ENCODE measurements at regions of chr18 and their contacts with region 1.

Region 1: GRCh38 chr18:35581898-35582641 is 530 bp downstream of the GALNT1 start:
- DNase-seq: peak in 4 of 5 donors; percentile 5 to 46 (median 16)
- H3K4me3 ChIP-seq: peak overlapping the region; percentile 61
- H3K4me3 Mint-ChIP-seq: peak overlapping the region; percentile 78 to 92 (median 91)
- H3K27ac ChIP-seq: peak overlapping the region; percentile 34
- H3K27ac Mint-ChIP-seq: peak overlapping the region; percentile 50 to 93 (median 83)
- H3K4me1 ChIP-seq: peaks cover 13% of the 10 kb centered on the region
- H3K4me1 Mint-ChIP-seq: peaks cover 34 to 53% (median 38%) of the 10 kb centered on the region in 3 donors
- H3K27me3 ChIP-seq: no peaks in the 10 kb centered on the region
- H3K27me3 Mint-ChIP-seq: peaks cover 3 to 9% of the 10 kb centered on the region in 2 donors

Region 2: GRCh38 chr18:35497370-35498197 is 84.5 kb before region 1 on chr18 and contains the start of gene INO80C:
- CTCF ChIA-PET with region 1: interaction called, 3 read pairs
- POLR2A ChIA-PET with region 1: interaction called, 13 read pairs
- DNase-seq: peak; percentile 87 to 94 (median 91)
- H3K4me3 ChIP-seq: peak within 1 kb of the TSS; percentile 99
- H3K4me3 Mint-ChIP-seq: peak within 1 kb of the TSS; percentile 93 to 100 (median 99)
- H3K27ac ChIP-seq: peak within 1 kb of the TSS; percentile 97
- H3K27ac Mint-ChIP-seq: peak within 1 kb of the TSS; percentile 95 to 100 (median 100)
- H3K4me1 ChIP-seq: peaks cover 20% of the 10 kb centered on the region
- H3K4me1 Mint-ChIP-seq: peaks cover 27 to 42% (median 39%) of the 10 kb centered on the region in 3 donors
- H3K27me3 ChIP-seq: no peaks in the 10 kb centered on the region
- H3K27me3 Mint-ChIP-seq: peaks cover 0 to 2% of the 10 kb centered on the region in 2 donors
- total RNA-seq, gene INO80C: 27.0 to 28.5 TPM

Region 3: DNA sequence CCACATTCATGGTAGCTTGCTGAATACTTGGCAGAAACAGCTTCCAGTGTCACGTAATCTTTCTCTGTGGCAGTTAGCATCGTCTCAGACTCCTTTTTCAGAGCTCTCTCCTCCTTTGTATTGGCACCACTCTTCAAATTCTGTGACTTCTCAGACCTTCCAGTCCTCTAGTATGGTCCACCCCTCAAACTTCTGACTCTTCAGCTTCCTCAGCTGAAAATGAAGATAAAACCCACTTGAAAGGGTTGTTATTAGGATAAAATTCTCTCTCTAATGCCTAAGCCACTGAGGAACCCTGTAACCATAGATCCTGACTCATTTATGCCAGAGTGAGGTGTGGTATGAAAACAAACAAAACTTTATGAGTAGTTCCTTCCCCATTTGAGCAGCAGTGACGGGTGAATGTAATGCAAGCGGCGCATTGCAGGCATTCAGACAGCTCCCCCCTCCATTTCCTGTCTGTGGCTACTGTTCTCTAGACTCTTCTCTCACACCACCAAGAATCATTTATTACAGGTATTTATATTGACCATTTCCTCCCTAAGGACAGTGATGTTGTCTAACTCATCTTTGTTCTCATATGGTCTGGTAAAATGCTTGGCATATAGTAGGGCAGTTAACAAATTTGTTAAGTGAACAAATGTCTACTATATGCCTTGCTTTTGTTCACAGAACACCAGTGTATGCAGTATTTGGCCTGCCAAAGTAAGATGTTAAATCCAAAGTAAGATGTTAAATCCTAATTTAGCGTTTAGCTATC is 34.8 kb after region 1 on chr18:
- CTCF ChIA-PET with region 1: no interaction called
- POLR2A ChIA-PET with region 1: interaction called, 10 read pairs
- DNase-seq: peak; percentile 35 to 84 (median 57)
- H3K4me3 ChIP-seq: peak overlapping the region; percentile 21
- H3K4me3 Mint-ChIP-seq: no peak overlapping the region
- H3K27ac ChIP-seq: peak overlapping the region; percentile 1
- H3K27ac Mint-ChIP-seq: no peak overlapping the region
- H3K4me1 ChIP-seq: peaks cover 24% of the 10 kb centered on the region
- H3K4me1 Mint-ChIP-seq: peaks cover 11 to 25% (median 15%) of the 10 kb centered on the region in 3 donors
- H3K27me3 ChIP-seq: no peaks in the 10 kb centered on the region
- H3K27me3 Mint-ChIP-seq: no peaks in the 10 kb centered on the region